Heart left ventricle (tissue), 16 donors: ENCODE measurements at regions of chr18 and their contacts with region 1.

Region 1: GRCh38 chr18:4106407-4107033 is 348.6 kb downstream of the DLGAP1 start:
- DNase-seq: peak; percentile 29 to 62 (median 42)
- ATAC-seq: peak in 1 of 4 donors; percentile 29
- H3K4me3 ChIP-seq: peak overlapping the region in 1 of 12 donors; percentile 8
- H3K27ac ChIP-seq: no peak overlapping the region
- H3K4me1 ChIP-seq: no peaks in the 10 kb centered on the region
- H3K27me3 ChIP-seq: no peaks in the 10 kb centered on the region
- CTCF ChIP-seq: peak; percentile 66 to 85 (median 74)
- POLR2A ChIP-seq: no peak

Region 2: DNA sequence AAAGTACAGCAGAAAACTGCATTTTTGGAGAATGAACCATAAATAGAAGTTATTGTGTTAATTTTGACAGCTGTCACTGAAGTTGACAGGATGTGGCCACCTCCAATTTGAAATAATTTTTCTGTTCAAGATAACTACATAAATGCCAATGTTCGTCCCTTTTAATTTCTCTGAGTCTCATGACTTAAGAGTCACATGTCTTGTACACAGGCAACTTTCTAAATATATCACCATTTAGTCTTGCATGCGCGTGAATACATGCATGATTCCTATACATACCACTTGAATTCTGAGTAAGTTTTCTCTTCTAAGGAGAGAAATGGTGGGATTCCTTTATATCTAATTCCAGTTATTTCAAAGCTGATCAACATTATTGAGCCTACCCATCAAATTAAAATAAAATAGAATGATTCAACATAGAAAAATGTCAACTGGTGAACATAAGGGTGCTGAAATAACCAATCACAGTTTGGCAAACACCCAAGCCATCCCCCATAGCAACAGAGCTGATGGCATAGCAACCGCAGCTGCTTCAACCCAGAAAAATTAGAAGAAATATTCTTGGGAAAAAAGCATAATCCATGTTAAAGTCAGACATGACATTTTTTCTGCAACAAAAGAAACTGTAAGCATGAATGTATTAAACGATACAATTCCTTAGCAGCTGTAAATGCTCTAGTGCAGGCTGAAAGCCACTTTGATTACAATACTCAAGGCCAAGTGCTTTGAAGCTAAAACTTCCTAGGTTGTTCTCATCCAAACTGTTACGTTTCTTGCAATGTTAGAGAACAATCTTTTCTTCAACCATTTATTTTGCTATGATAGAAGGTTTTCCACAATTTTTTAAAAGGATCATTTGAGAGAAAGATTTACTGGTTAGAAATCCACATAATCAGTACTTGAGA is 65.9 kb after region 1 on chr18:
- intact Hi-C with region 1: no loop called
- DNase-seq: no peak
- ATAC-seq: no peak
- H3K4me3 ChIP-seq: no peak overlapping the region
- H3K27ac ChIP-seq: no peak overlapping the region
- H3K4me1 ChIP-seq: peaks cover 0 to 5% (median 0%) of the 10 kb centered on the region in 12 donors
- H3K27me3 ChIP-seq: no peaks in the 10 kb centered on the region
- CTCF ChIP-seq: no peak
- POLR2A ChIP-seq: no peak

Region 3: GRCh38 chr18:5052491-5052890 is 946.0 kb after region 1 on chr18:
- intact Hi-C with region 1: loop called in 9 of 10 experiments (anchors 2 to 10 kb)
- DNase-seq: no peak
- ATAC-seq: no peak
- H3K4me3 ChIP-seq: no peak overlapping the region
- H3K27ac ChIP-seq: no peak overlapping the region
- H3K4me1 ChIP-seq: no peaks in the 10 kb centered on the region
- H3K27me3 ChIP-seq: no peaks in the 10 kb centered on the region
- CTCF ChIP-seq: no peak
- POLR2A ChIP-seq: no peak

Region 4: DNA sequence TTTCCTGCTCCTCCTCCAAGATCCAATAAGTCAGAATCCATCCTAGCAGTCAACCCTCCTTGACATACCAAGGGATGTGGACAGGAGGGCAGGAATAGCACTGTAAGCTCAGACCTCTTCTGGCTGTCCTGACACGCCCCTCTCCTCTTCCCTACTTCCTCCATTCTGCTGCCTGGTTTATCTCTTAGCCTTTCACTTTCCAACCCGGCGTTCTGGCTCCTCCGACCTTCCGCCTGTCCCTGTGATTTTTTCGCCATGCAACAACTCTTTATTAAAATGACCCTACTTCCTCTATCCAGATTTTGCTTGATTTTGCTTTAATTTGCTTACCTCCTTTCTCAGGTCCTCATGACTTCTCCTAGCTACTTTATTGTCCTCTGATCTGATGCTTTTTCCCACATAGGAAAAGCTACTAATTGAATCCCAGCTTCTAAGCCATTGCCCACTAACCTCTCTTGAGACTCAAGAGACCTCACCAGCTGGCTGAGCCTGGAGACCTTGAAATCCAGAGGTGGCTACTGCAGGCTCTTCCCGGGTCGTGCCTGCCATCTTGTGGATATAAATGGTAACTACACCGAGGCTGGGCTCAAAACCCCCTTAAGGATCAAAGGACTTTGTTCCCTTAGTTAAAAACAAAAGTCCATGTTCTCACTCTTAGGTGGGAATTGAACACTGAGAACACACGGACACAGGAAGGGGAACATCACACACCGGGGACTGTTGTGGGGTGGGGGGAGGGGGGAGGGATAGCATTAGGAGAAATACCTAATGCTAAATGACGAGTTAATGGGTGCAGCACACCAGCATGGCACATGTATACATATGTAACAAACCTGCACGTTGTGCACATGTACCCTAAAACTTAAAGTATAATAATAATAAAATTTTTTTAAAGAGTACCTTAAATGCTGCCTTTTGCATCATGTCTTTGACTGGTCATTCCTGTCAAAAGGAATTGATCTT is 951.1 kb after region 1 on chr18:
- intact Hi-C with region 1: loop called in 9 of 10 experiments (anchors 2 to 10 kb)
- DNase-seq: peak; percentile 35 to 62 (median 58)
- ATAC-seq: peak in 3 of 4 donors; percentile 63 to 77 (median 72)
- H3K4me3 ChIP-seq: peak overlapping the region in 1 of 12 donors; percentile 9
- H3K27ac ChIP-seq: no peak overlapping the region
- H3K4me1 ChIP-seq: peaks cover 0 to 16% (median 0%) of the 10 kb centered on the region in 12 donors
- H3K27me3 ChIP-seq: no peaks in the 10 kb centered on the region
- CTCF ChIP-seq: peak; percentile 48 to 76 (median 68)
- POLR2A ChIP-seq: no peak